ENCODE measurements at regions of chr12 and their contacts with region 1.

Region 1: DNA sequence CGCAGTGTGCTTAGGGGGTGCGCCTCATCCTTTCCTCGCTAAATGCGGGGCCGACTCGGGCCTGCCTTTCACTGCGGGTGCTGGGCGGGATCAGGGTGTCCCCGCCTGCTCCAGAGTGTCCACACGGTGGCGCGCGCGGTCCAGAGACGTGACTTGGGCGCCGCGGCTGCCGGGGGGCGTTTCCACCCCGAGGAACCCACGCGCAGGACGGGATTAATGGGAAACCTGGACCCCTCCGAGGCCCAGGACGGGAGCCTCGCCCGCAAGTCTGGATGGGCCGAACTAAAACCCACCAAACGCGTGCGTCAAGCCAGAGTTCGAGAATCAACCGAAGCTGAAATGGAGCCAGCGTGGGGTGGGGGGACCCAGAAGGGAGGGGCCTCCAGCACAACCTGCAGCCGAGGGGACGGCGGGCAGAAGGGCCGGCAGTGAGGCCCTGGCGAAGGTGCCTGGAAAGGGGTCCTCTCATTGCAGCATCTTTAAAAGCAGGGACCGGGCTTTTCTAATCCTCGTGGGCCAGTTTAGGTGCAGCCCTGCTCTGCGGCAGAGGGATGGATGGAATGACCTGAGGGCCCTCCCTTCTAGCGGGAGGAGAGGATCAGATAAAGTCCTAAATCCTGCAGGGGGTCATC is 93.3 kb downstream of the NINJ2 start:
- DNase-seq: peak; percentile 87 to 95
- ATAC-seq: peak; percentile 37 to 69
- H3K4me3 ChIP-seq: peak overlapping the region; percentile 62
- H3K27ac ChIP-seq: peak overlapping the region; percentile 97 to 98
- H3K4me1 ChIP-seq: peaks cover 30% of the 10 kb centered on the region
- CTCF ChIP-seq: peak; percentile 92
- EP300 ChIP-seq: no peak
- POLR2A ChIP-seq: no peak
- RAD21 ChIP-seq: peak; percentile 95 to 98

Region 2: DNA sequence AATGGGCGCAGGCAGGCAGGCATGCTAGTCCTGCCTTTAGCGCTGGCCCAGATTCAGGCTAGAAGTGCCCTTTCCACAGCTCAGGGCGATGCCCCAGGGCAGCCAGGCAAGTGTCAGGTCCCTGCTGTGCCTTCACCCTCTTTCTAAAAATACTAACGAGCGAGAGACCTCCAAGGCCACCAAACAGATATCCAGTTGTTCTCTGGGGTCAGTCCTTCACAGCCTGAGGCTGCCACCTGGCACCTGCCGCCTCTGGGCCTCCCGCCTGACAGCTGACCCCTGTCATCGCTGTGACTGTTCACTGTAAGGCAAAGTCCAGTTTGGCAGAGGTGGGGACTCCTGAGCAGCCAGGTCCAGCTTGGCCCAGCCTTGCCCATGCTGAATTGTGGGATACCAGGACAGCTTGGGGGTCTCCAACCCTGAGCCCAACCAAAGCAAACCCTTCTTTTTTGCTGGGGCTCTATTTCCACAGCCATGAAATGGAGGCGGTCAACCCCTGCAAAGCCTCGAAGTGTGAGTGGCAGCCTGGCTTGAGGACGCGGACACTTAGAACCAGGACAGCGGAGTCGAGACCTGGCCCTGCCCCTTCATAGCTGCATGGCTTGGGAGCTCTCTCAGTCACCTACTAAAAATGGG is 13.4 kb after region 1 on chr12:
- CTCF ChIA-PET with region 1: interaction called, 24 read pairs
- POLR2A ChIA-PET with region 1: no interaction called
- DNase-seq: no peak
- ATAC-seq: peak in 1 of 2 experiments; percentile 6; a peak in 1 of 6 replicates
- H3K4me3 ChIP-seq: no peak overlapping the region
- H3K27ac ChIP-seq: no peak overlapping the region; a peak in 1 of 6 replicates
- H3K4me1 ChIP-seq: peaks cover 22% of the 10 kb centered on the region
- CTCF ChIP-seq: no peak
- EP300 ChIP-seq: no peak
- POLR2A ChIP-seq: no peak
- RAD21 ChIP-seq: no peak

Region 3: GRCh38 chr12:630656-631632 is 61.0 kb after region 1 on chr12:
- CTCF ChIA-PET with region 1: interaction called, 29 read pairs
- POLR2A ChIA-PET with region 1: interaction called, 14 read pairs
- DNase-seq: no peak
- ATAC-seq: no peak
- H3K4me3 ChIP-seq: no peak overlapping the region
- H3K27ac ChIP-seq: peak overlapping the region; percentile 96 to 97
- H3K4me1 ChIP-seq: peaks cover 58% of the 10 kb centered on the region
- CTCF ChIP-seq: no peak
- EP300 ChIP-seq: no peak
- POLR2A ChIP-seq: no peak
- RAD21 ChIP-seq: no peak

Region 4: GRCh38 chr12:810671-811415 is 240.9 kb after region 1 on chr12:
- CTCF ChIA-PET with region 1: interaction called, 78 read pairs
- POLR2A ChIA-PET with region 1: interaction called, 4 read pairs
- DNase-seq: no peak
- ATAC-seq: no peak
- H3K4me3 ChIP-seq: no peak overlapping the region
- H3K27ac ChIP-seq: no peak overlapping the region
- H3K4me1 ChIP-seq: peaks cover 64% of the 10 kb centered on the region
- CTCF ChIP-seq: no peak
- EP300 ChIP-seq: no peak
- POLR2A ChIP-seq: no peak
- RAD21 ChIP-seq: no peak

Region 5: GRCh38 chr12:949453-950191 is 379.7 kb after region 1 on chr12 and contains the start of gene RAD52:
- CTCF ChIA-PET with region 1: interaction called, 48 read pairs
- POLR2A ChIA-PET with region 1: interaction called, 34 read pairs
- DNase-seq: peak; percentile 82 to 100
- ATAC-seq: peak; percentile 96 to 97
- H3K4me3 ChIP-seq: peak within 1 kb of the TSS; percentile 69
- H3K27ac ChIP-seq: peak within 1 kb of the TSS; percentile 88 to 98
- H3K4me1 ChIP-seq: peaks cover 11% of the 10 kb centered on the region; the same call in 1 of the 3 replicates
- CTCF ChIP-seq: peak; percentile 95
- EP300 ChIP-seq: no peak
- POLR2A ChIP-seq: peak; percentile 77
- RAD21 ChIP-seq: peak; percentile 87 to 94
- polyA plus RNA-seq, gene RAD52: 23.6 and 29.6 TPM in 2 replicates